ENCODE measurements at regions of chr15 and their contacts with region 1.

Region 1: GRCh38 chr15:84588053-84588874 is 12.5 kb upstream of the ZSCAN2 start:
- DNase-seq: peak; percentile 68 to 84 (median 79)
- ATAC-seq: peak; percentile 100
- H3K4me3 ChIP-seq: no peak overlapping the region
- H3K4me3 Mint-ChIP-seq: peak overlapping the region in 8 of 10 donors; percentile 30 to 75 (median 63)
- H3K27ac ChIP-seq: no peak overlapping the region
- H3K27ac Mint-ChIP-seq: no peak overlapping the region
- H3K4me1 ChIP-seq: no peaks in the 10 kb centered on the region
- H3K4me1 Mint-ChIP-seq: peaks cover 0 to 6% (median 5%) of the 10 kb centered on the region in 7 donors
- H3K27me3 ChIP-seq: no peaks in the 10 kb centered on the region
- H3K27me3 Mint-ChIP-seq: peaks cover 0 to 34% (median 9%) of the 10 kb centered on the region in 5 donors

Region 2: GRCh38 chr15:84600851-84601838 is 12.9 kb after region 1 on chr15 and contains the start of gene ZSCAN2:
- CTCF ChIA-PET with region 1: interaction called, 7 read pairs
- POLR2A ChIA-PET with region 1: interaction called, 4 read pairs
- intact Hi-C with region 1: loop called in 1 of 2 experiments (anchors 1 kb)
- DNase-seq: peak; percentile 83 to 93 (median 90)
- ATAC-seq: peak; percentile 98
- H3K4me3 ChIP-seq: peak within 1 kb of the TSS; percentile 96
- H3K4me3 Mint-ChIP-seq: peak within 1 kb of the TSS; percentile 89 to 99 (median 96)
- H3K27ac ChIP-seq: peak within 1 kb of the TSS; percentile 77
- H3K27ac Mint-ChIP-seq: peak within 1 kb of the TSS; percentile 67 to 97 (median 88)
- H3K4me1 ChIP-seq: peaks cover 29 to 36% of the 10 kb centered on the region in 2 donors
- H3K4me1 Mint-ChIP-seq: peaks cover 53 to 89% (median 71%) of the 10 kb centered on the region in 7 donors
- H3K27me3 ChIP-seq: no peaks in the 10 kb centered on the region
- H3K27me3 Mint-ChIP-seq: no peaks in the 10 kb centered on the region
- total RNA-seq, gene ZSCAN2: 4.8 to 13.0 (median 6.8) TPM

Region 3: GRCh38 chr15:84658080-84658787 is 70.0 kb after region 1 on chr15 and contains the start of gene NMB:
- CTCF ChIA-PET with region 1: interaction called, 10 read pairs
- POLR2A ChIA-PET with region 1: interaction called, 4 read pairs
- intact Hi-C with region 1: loop called (anchors 1 kb)
- DNase-seq: peak; percentile 76 to 88 (median 87)
- ATAC-seq: peak; percentile 82
- H3K4me3 ChIP-seq: peak within 1 kb of the TSS; percentile 73
- H3K4me3 Mint-ChIP-seq: peak within 1 kb of the TSS; percentile 78 to 86 (median 83)
- H3K27ac ChIP-seq: peak within 1 kb of the TSS; percentile 76
- H3K27ac Mint-ChIP-seq: peak within 1 kb of the TSS; percentile 74 to 93 (median 84)
- H3K4me1 ChIP-seq: peaks cover 13 to 27% of the 10 kb centered on the region in 2 donors
- H3K4me1 Mint-ChIP-seq: peaks cover 13 to 47% (median 39%) of the 10 kb centered on the region in 7 donors
- H3K27me3 ChIP-seq: no peaks in the 10 kb centered on the region
- H3K27me3 Mint-ChIP-seq: no peaks in the 10 kb centered on the region
- total RNA-seq, gene NMB: 1.2 to 3.1 (median 2.9) TPM

Region 4: GRCh38 chr15:84671211-84671610 is 82.9 kb after region 1 on chr15:
- CTCF ChIA-PET with region 1: no interaction called
- POLR2A ChIA-PET with region 1: no interaction called
- intact Hi-C with region 1: no loop called
- DNase-seq: no peak
- ATAC-seq: no peak
- H3K4me3 ChIP-seq: no peak overlapping the region
- H3K4me3 Mint-ChIP-seq: no peak overlapping the region
- H3K27ac ChIP-seq: no peak overlapping the region
- H3K27ac Mint-ChIP-seq: peak overlapping the region in 5 of 9 donors; percentile 7 to 46 (median 15)
- H3K4me1 ChIP-seq: no peaks in the 10 kb centered on the region
- H3K4me1 Mint-ChIP-seq: peaks cover 0 to 18% (median 1%) of the 10 kb centered on the region in 7 donors
- H3K27me3 ChIP-seq: no peaks in the 10 kb centered on the region
- H3K27me3 Mint-ChIP-seq: no peaks in the 10 kb centered on the region

Region 5: DNA sequence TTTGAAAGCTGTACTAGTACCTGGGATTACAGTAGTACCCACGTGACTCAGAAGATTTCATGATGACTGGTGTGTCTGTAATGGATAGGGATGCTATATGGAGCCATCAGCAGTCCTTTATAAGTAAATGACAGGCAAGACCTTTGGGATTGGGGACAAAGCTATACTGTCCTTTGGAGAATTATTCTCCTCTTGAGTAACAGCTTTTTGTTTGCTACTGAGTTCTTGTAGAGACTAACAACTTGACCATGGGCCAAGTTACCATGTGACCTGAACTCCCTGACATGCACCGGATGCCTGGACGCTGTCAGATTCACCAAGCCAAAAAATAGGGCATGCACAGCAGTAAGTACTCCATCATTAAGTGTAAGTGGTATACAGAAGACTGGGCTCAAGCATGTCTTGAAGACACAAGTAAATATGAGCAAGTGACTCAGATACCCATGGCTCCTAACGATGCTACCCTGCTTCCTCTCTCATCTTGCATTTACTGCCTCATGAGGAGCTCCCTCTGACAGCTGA is 114.8 kb after region 1 on chr15:
- CTCF ChIA-PET with region 1: no interaction called
- POLR2A ChIA-PET with region 1: no interaction called
- intact Hi-C with region 1: no loop called
- DNase-seq: no peak
- ATAC-seq: peak; percentile 40
- H3K4me3 ChIP-seq: no peak overlapping the region
- H3K4me3 Mint-ChIP-seq: peak overlapping the region in 3 of 10 donors; percentile 6 to 24 (median 7)
- H3K27ac ChIP-seq: no peak overlapping the region
- H3K27ac Mint-ChIP-seq: peak overlapping the region in 6 of 9 donors; percentile 9 to 86 (median 39)
- H3K4me1 ChIP-seq: peaks cover 0 to 24% of the 10 kb centered on the region in 2 donors
- H3K4me1 Mint-ChIP-seq: peaks cover 45 to 82% (median 75%) of the 10 kb centered on the region in 7 donors
- H3K27me3 ChIP-seq: no peaks in the 10 kb centered on the region
- H3K27me3 Mint-ChIP-seq: no peaks in the 10 kb centered on the region

Region 6: DNA sequence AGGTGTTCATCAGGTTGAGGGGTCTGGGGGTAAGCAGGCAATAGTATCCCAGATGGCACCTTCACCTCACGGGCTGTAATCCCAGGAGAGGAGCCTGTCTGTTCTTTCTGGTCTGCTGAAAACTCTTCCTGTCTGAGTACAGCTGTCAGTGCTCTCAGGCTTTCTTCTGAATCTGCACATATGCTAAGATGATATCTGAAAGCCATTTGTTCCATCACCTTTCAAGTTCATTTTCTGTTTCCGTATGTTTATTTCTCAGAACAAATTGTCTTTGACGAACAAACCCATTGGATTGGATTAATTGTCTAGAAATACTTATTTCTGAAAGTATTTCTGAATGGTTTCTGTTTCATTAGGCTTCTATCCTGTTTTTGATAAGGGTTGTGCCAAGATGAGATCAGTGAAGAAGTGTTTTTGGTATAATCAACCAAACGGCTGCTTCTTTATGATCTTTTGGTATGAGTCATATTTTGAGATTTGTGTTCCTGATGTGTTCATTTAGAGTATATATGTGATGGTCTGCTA is 173.4 kb after region 1 on chr15:
- CTCF ChIA-PET with region 1: no interaction called
- POLR2A ChIA-PET with region 1: no interaction called
- intact Hi-C with region 1: loop called in 1 of 2 experiments (anchors 5 kb)
- DNase-seq: peak in 6 of 9 donors; percentile 14 to 42 (median 31)
- ATAC-seq: peak; percentile 37
- H3K4me3 ChIP-seq: no peak overlapping the region
- H3K4me3 Mint-ChIP-seq: no peak overlapping the region
- H3K27ac ChIP-seq: peak overlapping the region; percentile 51
- H3K27ac Mint-ChIP-seq: no peak overlapping the region
- H3K4me1 ChIP-seq: peaks cover 24 to 36% of the 10 kb centered on the region in 2 donors
- H3K4me1 Mint-ChIP-seq: peaks cover 5 to 24% (median 12%) of the 10 kb centered on the region in 7 donors
- H3K27me3 ChIP-seq: no peaks in the 10 kb centered on the region
- H3K27me3 Mint-ChIP-seq: no peaks in the 10 kb centered on the region

Region 7: DNA sequence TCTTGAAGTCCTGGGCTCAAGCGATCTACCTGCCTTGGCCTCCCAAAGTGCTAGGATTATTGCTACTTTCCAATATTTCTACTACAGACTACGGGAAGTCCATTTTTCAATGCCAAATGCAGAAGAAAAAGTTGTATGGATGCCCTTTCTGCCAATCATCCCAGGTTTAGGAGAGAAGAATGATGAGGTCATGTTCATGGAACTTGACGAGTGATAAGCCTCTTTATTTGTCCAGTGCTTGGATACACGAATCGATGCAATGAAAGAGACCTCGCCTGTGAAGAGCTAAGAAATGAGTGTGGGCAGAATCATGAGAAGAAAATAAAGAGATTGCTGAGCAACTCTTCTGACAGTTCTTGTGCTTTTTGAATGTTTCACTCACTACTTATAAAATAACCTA is 295.2 kb after region 1 on chr15:
- CTCF ChIA-PET with region 1: interaction called, 8 read pairs
- POLR2A ChIA-PET with region 1: no interaction called
- intact Hi-C with region 1: loop called (anchors 1 kb)
- DNase-seq: no peak
- ATAC-seq: no peak
- H3K4me3 ChIP-seq: no peak overlapping the region
- H3K4me3 Mint-ChIP-seq: no peak overlapping the region
- H3K27ac ChIP-seq: no peak overlapping the region
- H3K27ac Mint-ChIP-seq: no peak overlapping the region
- H3K4me1 ChIP-seq: no peaks in the 10 kb centered on the region
- H3K4me1 Mint-ChIP-seq: no peaks in the 10 kb centered on the region
- H3K27me3 ChIP-seq: no peaks in the 10 kb centered on the region
- H3K27me3 Mint-ChIP-seq: peaks cover 0 to 10% (median 0%) of the 10 kb centered on the region in 5 donors

Region 8: GRCh38 chr15:85044251-85044853 is 456.1 kb after region 1 on chr15:
- CTCF ChIA-PET with region 1: interaction called, 3 read pairs
- POLR2A ChIA-PET with region 1: no interaction called
- intact Hi-C with region 1: loop called (anchors 1 to 10 kb)
- DNase-seq: peak in 8 of 9 donors; percentile 15 to 43 (median 30)
- ATAC-seq: peak; percentile 61
- H3K4me3 ChIP-seq: no peak overlapping the region
- H3K4me3 Mint-ChIP-seq: no peak overlapping the region
- H3K27ac ChIP-seq: no peak overlapping the region
- H3K27ac Mint-ChIP-seq: peak overlapping the region in 3 of 9 donors; percentile 15 to 61 (median 53)
- H3K4me1 ChIP-seq: peaks cover 0 to 6% of the 10 kb centered on the region in 2 donors
- H3K4me1 Mint-ChIP-seq: peaks cover 7 to 44% (median 21%) of the 10 kb centered on the region in 7 donors
- H3K27me3 ChIP-seq: no peaks in the 10 kb centered on the region
- H3K27me3 Mint-ChIP-seq: no peaks in the 10 kb centered on the region